WTC11 (cell line): ENCODE measurements at regions of chr2 and their contacts with region 1.

Region 1: GRCh38 chr2:235779444-235779896 is 285.6 kb downstream of the AGAP1 start:
- DNase-seq: peak; percentile 92
- ATAC-seq: peak; percentile 98
- H3K4me3 Mint-ChIP-seq: no peak overlapping the region
- H3K27ac Mint-ChIP-seq: peak overlapping the region; percentile 24; the same call in 1 of the 2 replicates
- H3K4me1 Mint-ChIP-seq: peaks cover 13% of the 10 kb centered on the region
- H3K27me3 Mint-ChIP-seq: no peaks in the 10 kb centered on the region
- CTCF ChIP-seq: peak; percentile 53; the same call in 1 of the 2 replicates

Region 2: GRCh38 chr2:235793163-235793752 is 13.8 kb after region 1 on chr2:
- CTCF ChIA-PET with region 1: interaction called, 70 read pairs
- POLR2A ChIA-PET with region 1: no interaction called
- DNase-seq: peak; percentile 60
- ATAC-seq: peak; percentile 93
- H3K4me3 Mint-ChIP-seq: no peak overlapping the region
- H3K27ac Mint-ChIP-seq: no peak overlapping the region
- H3K4me1 Mint-ChIP-seq: peaks cover 22% of the 10 kb centered on the region
- H3K27me3 Mint-ChIP-seq: no peaks in the 10 kb centered on the region
- CTCF ChIP-seq: peak; percentile 30

Region 3: GRCh38 chr2:236143811-236144210 is 364.3 kb after region 1 on chr2:
- CTCF ChIA-PET with region 1: interaction called, 10 read pairs
- POLR2A ChIA-PET with region 1: no interaction called
- DNase-seq: no peak
- ATAC-seq: no peak
- H3K4me3 Mint-ChIP-seq: no peak overlapping the region
- H3K27ac Mint-ChIP-seq: no peak overlapping the region
- H3K4me1 Mint-ChIP-seq: peaks cover 13% of the 10 kb centered on the region
- H3K27me3 Mint-ChIP-seq: peaks cover 6% of the 10 kb centered on the region
- CTCF ChIP-seq: no peak